Ascending aorta (tissue), 2 donors: ENCODE measurements at regions of chr5 and their contacts with region 1.

Region 1: GRCh38 chr5:14142827-14143548 is at the start of gene TRIO:
- DNase-seq: peak; percentile 66 to 94
- H3K4me3 ChIP-seq: peak within 1 kb of the TSS; percentile 92 to 97
- H3K27ac ChIP-seq: peak within 1 kb of the TSS; percentile 93 to 98
- H3K4me1 ChIP-seq: peaks cover 0 to 29% of the 10 kb centered on the region in 2 donors
- H3K27me3 ChIP-seq: no peaks in the 10 kb centered on the region
- CTCF ChIP-seq: peak; percentile 23 to 68 (median 67)
- total RNA-seq, gene TRIO: 262 TPM

Region 2: GRCh38 chr5:14035859-14036440 is 107.0 kb before region 1 on chr5:
- intact Hi-C with region 1: loop called (anchors 2 kb)
- DNase-seq: peak in 1 of 2 donors; percentile 76
- H3K4me3 ChIP-seq: peak overlapping the region in 1 of 2 donors; percentile 46
- H3K27ac ChIP-seq: peak overlapping the region; percentile 11 to 76
- H3K4me1 ChIP-seq: peaks cover 5 to 19% of the 10 kb centered on the region in 2 donors
- H3K27me3 ChIP-seq: no peaks in the 10 kb centered on the region
- CTCF ChIP-seq: no peak

Region 3: GRCh38 chr5:14156650-14157493 is 13.9 kb after region 1 on chr5:
- intact Hi-C with region 1: loop called (anchors 1 kb)
- DNase-seq: peak in 1 of 2 donors; percentile 80
- H3K4me3 ChIP-seq: peak overlapping the region; percentile 24 to 51
- H3K27ac ChIP-seq: peak overlapping the region; percentile 61 to 67
- H3K4me1 ChIP-seq: peaks cover 12 to 42% of the 10 kb centered on the region in 2 donors
- H3K27me3 ChIP-seq: no peaks in the 10 kb centered on the region
- CTCF ChIP-seq: no peak

Region 4: GRCh38 chr5:14270209-14270702 is 127.3 kb after region 1 on chr5:
- intact Hi-C with region 1: loop called (anchors 1 kb)
- DNase-seq: peak in 1 of 2 donors; percentile 87
- H3K4me3 ChIP-seq: no peak overlapping the region
- H3K27ac ChIP-seq: peak overlapping the region; percentile 64 to 69
- H3K4me1 ChIP-seq: peaks cover 16 to 37% of the 10 kb centered on the region in 2 donors
- H3K27me3 ChIP-seq: no peaks in the 10 kb centered on the region
- CTCF ChIP-seq: peak; percentile 66 to 76 (median 76)

Region 5: GRCh38 chr5:14581333-14581890 is 438.4 kb after region 1 on chr5 and contains the start of gene OTULINL:
- intact Hi-C with region 1: loop called (anchors 10 kb)
- DNase-seq: peak; percentile 46 to 89
- H3K4me3 ChIP-seq: peak within 1 kb of the TSS; percentile 66 to 85
- H3K27ac ChIP-seq: peak within 1 kb of the TSS in 1 of 2 donors; percentile 15
- H3K4me1 ChIP-seq: peaks cover 0 to 6% of the 10 kb centered on the region in 2 donors
- H3K27me3 ChIP-seq: no peaks in the 10 kb centered on the region
- CTCF ChIP-seq: no peak
- total RNA-seq, gene OTULINL: 0.21 TPM